ENCODE measurements at regions of chr7 and their contacts with region 1.

Region 1: GRCh38 chr7:142587578-142588191 is 161.6 kb upstream of the PRSS1 start:
- DNase-seq: no peak
- H3K4me3 ChIP-seq: no peak overlapping the region
- H3K27ac ChIP-seq: no peak overlapping the region
- H3K4me1 ChIP-seq: peaks cover 0 to 5% (median 3%) of the 10 kb centered on the region in 4 experiments; a peak in 3 of 7 replicates
- H3K27me3 ChIP-seq: no peaks in the 10 kb centered on the region
- CTCF ChIP-seq: peak in 2 of 3 experiments; percentile 84 to 99; a peak in 3 of 4 replicates
- EP300 ChIP-seq: no peak
- POLR2A ChIP-seq: no peak
- RAD21 ChIP-seq: peak; percentile 26 to 40; a peak in 3 of 4 replicates

Region 2: GRCh38 chr7:142357953-142358520 is 229.6 kb before region 1 on chr7:
- CTCF ChIA-PET with region 1: interaction called, 11 read pairs
- POLR2A ChIA-PET with region 1: no interaction called
- DNase-seq: peak in 1 of 2 experiments; percentile 56
- H3K4me3 ChIP-seq: no peak overlapping the region
- H3K27ac ChIP-seq: no peak overlapping the region
- H3K4me1 ChIP-seq: peaks cover 5 to 13% (median 9%) of the 10 kb centered on the region in 4 experiments; a peak in 5 of 7 replicates
- H3K27me3 ChIP-seq: no peaks in the 10 kb centered on the region
- CTCF ChIP-seq: peak; percentile 32 to 86 (median 86)
- EP300 ChIP-seq: no peak
- POLR2A ChIP-seq: no peak
- RAD21 ChIP-seq: peak; percentile 78 to 88

Region 3: DNA sequence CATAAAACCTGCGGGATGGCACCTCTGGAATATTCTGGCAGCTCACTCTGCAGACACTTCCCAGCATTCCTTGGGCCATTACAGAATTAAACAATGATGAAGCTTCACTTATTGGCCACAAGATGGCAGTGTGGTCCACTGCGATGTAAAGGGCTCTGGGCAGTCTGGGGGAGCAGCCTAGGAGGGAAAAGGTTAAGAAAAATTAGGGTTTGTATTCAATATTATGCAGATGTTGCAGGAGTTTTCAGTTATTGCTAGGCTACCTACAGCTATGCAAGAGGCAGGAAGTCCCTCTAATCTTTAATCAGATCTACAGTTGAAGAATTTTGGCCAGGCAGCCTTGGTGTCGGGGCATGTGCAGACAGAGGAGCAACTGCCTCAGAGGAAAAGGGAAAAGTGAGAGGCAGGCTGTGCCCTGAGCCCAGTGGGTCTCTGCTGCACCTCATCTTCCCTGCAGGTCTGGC is 71.6 kb before region 1 on chr7:
- CTCF ChIA-PET with region 1: interaction called, 25 read pairs
- POLR2A ChIA-PET with region 1: no interaction called
- DNase-seq: peak in 1 of 2 experiments; percentile 56
- H3K4me3 ChIP-seq: no peak overlapping the region
- H3K27ac ChIP-seq: no peak overlapping the region
- H3K4me1 ChIP-seq: peaks cover 0 to 3% (median 0%) of the 10 kb centered on the region in 4 experiments; a peak in 1 of 7 replicates
- H3K27me3 ChIP-seq: no peaks in the 10 kb centered on the region
- CTCF ChIP-seq: peak; percentile 53 to 81 (median 75)
- EP300 ChIP-seq: no peak
- POLR2A ChIP-seq: no peak
- RAD21 ChIP-seq: peak; percentile 61 to 67

Region 4: DNA sequence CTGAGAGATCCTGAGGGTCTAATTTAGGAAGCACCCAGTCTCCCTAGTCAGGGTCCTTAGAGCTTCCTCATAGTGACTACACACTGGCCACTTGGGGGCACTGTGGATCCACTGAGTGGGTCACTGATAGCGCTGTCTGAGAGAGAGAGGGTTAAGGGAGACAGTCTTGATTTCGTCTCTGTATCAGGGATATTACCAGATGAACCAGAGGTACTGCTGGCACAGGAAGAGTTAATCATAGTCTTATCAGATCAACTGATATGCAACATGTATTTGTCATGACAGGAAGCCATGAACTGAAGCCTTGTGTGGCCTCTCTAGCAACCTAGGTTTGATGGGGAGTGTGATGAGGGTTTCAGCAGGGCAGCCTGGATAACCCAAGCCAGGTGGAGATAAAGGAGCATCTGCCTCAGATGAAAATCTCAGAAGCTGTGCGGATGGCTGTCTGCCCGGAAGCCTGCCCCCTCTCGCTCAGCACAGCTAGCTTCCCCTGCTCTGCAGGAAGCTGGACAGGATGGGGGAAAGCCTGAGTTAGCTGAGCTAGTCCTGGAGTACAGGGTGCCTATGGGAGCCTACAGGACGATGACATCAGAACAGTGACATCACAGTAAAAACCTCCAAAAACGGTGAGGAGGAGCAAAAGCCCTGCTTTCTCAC is 52.4 kb before region 1 on chr7:
- CTCF ChIA-PET with region 1: interaction called, 59 read pairs
- POLR2A ChIA-PET with region 1: no interaction called
- DNase-seq: peak in 1 of 2 experiments; percentile 85
- H3K4me3 ChIP-seq: no peak overlapping the region
- H3K27ac ChIP-seq: no peak overlapping the region
- H3K4me1 ChIP-seq: peaks cover 0 to 2% (median 0%) of the 10 kb centered on the region in 4 experiments; a peak in 1 of 7 replicates
- H3K27me3 ChIP-seq: no peaks in the 10 kb centered on the region; a peak in 1 of 7 replicates
- CTCF ChIP-seq: peak; percentile 76 to 95 (median 91)
- EP300 ChIP-seq: no peak
- POLR2A ChIP-seq: no peak
- RAD21 ChIP-seq: peak; percentile 94

Region 5: DNA sequence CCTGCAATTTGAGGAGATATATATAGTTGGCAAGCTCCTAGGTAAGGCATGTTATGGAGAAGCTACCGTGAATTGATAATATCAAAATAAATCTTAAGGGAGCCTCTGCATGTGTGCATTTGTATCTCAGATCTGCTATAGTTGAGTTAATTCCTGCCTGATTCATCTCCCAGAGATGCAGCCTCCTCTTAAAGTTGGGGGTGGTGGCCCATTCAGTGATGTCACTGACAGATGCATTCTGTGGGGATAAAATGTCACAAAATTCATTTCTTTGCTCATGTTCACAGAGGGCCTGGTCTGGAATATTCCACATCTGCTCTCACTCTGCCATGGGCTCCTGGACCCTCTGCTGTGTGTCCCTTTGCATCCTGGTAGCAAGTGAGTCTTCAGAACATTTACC is 24.2 kb before region 1 on chr7:
- CTCF ChIA-PET with region 1: interaction called, 46 read pairs
- POLR2A ChIA-PET with region 1: interaction called, 3 read pairs
- DNase-seq: no peak
- H3K4me3 ChIP-seq: no peak overlapping the region
- H3K27ac ChIP-seq: no peak overlapping the region
- H3K4me1 ChIP-seq: peaks cover 0 to 5% (median 0%) of the 10 kb centered on the region in 4 experiments; a peak in 2 of 7 replicates
- H3K27me3 ChIP-seq: no peaks in the 10 kb centered on the region
- CTCF ChIP-seq: no peak
- EP300 ChIP-seq: no peak
- POLR2A ChIP-seq: no peak
- RAD21 ChIP-seq: no peak

Region 6: GRCh38 chr7:142598297-142598696 is 10.6 kb after region 1 on chr7:
- CTCF ChIA-PET with region 1: interaction called, 39 read pairs
- POLR2A ChIA-PET with region 1: no interaction called
- DNase-seq: no peak
- H3K4me3 ChIP-seq: no peak overlapping the region
- H3K27ac ChIP-seq: no peak overlapping the region
- H3K4me1 ChIP-seq: no peaks in the 10 kb centered on the region
- H3K27me3 ChIP-seq: no peaks in the 10 kb centered on the region
- CTCF ChIP-seq: no peak
- EP300 ChIP-seq: no peak
- POLR2A ChIP-seq: no peak
- RAD21 ChIP-seq: no peak

Region 7: GRCh38 chr7:142612237-142612881 is 24.7 kb after region 1 on chr7:
- CTCF ChIA-PET with region 1: interaction called, 21 read pairs
- POLR2A ChIA-PET with region 1: no interaction called
- DNase-seq: no peak
- H3K4me3 ChIP-seq: no peak overlapping the region
- H3K27ac ChIP-seq: no peak overlapping the region
- H3K4me1 ChIP-seq: peaks cover 0 to 2% (median 1%) of the 10 kb centered on the region in 4 experiments; a peak in 2 of 7 replicates
- H3K27me3 ChIP-seq: no peaks in the 10 kb centered on the region
- CTCF ChIP-seq: no peak
- EP300 ChIP-seq: no peak
- POLR2A ChIP-seq: no peak
- RAD21 ChIP-seq: no peak